Sigmoid colon (tissue), 7 donors: ENCODE measurements at regions of chr13 and their contacts with region 1.

Region 1: GRCh38 chr13:40770934-40771618 is at the start of gene MRPS31:
- DNase-seq: peak; percentile 97
- H3K4me3 ChIP-seq: peak within 1 kb of the TSS; percentile 68 to 83 (median 71)
- H3K27ac ChIP-seq: peak within 1 kb of the TSS; percentile 85 to 89 (median 86)
- H3K4me1 ChIP-seq: peaks cover 0 to 13% (median 9%) of the 10 kb centered on the region in 4 donors
- H3K27me3 ChIP-seq: no peaks in the 10 kb centered on the region
- CTCF ChIP-seq: no peak
- EP300 ChIP-seq: peak in 1 of 4 donors; percentile 4
- POLR2A ChIP-seq: peak in 1 of 2 donors; percentile 56
- total RNA-seq, gene MRPS31: 11.4 to 23.3 (median 21.1) TPM

Region 2: GRCh38 chr13:40494513-40494912 is 276.6 kb before region 1 on chr13:
- intact Hi-C with region 1: no loop called
- DNase-seq: no peak
- H3K4me3 ChIP-seq: no peak overlapping the region
- H3K27ac ChIP-seq: no peak overlapping the region
- H3K4me1 ChIP-seq: peaks cover 0 to 13% (median 10%) of the 10 kb centered on the region in 4 donors
- H3K27me3 ChIP-seq: no peaks in the 10 kb centered on the region
- CTCF ChIP-seq: no peak
- EP300 ChIP-seq: no peak
- POLR2A ChIP-seq: no peak

Region 3: DNA sequence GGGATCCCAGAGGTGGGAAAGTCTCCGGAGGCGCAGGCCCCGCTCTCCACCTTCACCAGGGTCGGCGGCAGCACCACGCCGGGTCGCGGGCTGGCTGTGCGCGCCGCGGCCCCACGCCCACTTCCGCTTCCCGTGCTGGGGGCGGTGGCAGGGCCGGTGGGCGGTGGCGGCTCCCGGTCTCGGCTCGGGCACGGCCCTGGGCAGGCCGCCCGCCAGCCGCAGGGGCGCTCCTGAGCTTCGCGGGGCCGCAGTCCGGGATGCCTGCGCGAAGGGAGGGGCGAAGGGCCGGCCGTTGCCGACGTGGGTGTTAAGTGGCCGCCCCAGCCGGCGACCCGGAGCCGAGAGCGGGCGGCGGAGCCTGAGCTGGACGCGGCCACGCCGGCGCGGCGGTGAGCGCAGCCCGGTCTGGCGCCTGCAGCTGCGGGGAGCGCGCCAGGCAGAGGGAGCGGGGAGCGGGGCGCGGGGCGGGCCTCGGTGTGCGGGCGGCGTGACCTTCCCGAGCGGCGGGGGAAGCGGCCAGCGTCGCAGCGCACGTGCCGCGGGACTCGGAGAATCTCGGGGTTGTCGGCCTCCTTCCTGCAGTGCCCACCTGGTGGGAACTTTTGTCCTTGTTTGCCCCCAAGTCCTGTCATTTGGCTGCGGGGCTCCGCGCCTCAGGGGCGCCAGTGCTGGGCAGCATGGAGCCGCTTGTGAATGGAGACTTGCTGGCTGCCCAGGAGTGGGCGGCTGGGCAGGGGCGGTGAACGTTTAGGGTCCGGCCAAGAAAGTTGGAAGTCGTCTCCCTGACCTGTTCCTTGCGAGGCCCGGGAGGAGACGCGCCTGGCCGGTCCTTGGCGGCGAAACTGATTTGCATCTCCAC is 18.4 kb after region 1 on chr13 and contains the start of gene SLC25A15:
- intact Hi-C with region 1: loop called (anchors 2 kb)
- DNase-seq: peak; percentile 80
- H3K4me3 ChIP-seq: peak within 1 kb of the TSS; percentile 46 to 73 (median 70)
- H3K27ac ChIP-seq: peak within 1 kb of the TSS; percentile 78 to 83 (median 80)
- H3K4me1 ChIP-seq: peaks cover 0 to 9% (median 7%) of the 10 kb centered on the region in 4 donors
- H3K27me3 ChIP-seq: no peaks in the 10 kb centered on the region
- CTCF ChIP-seq: no peak
- EP300 ChIP-seq: no peak
- POLR2A ChIP-seq: no peak
- total RNA-seq, gene SLC25A15: 0.55 to 5.2 (median 2.7) TPM

Region 4: GRCh38 chr13:40922437-40923040 is 151.5 kb after region 1 on chr13:
- intact Hi-C with region 1: loop called (anchors 5 kb)
- DNase-seq: no peak
- H3K4me3 ChIP-seq: no peak overlapping the region
- H3K27ac ChIP-seq: no peak overlapping the region
- H3K4me1 ChIP-seq: peaks cover 0 to 13% (median 8%) of the 10 kb centered on the region in 4 donors
- H3K27me3 ChIP-seq: no peaks in the 10 kb centered on the region
- CTCF ChIP-seq: no peak
- EP300 ChIP-seq: no peak
- POLR2A ChIP-seq: no peak